ENCODE measurements at regions of chr15 and their contacts with region 1.

Region 1: GRCh38 chr15:22795206-22796063 is 9.0 kb downstream of the NIPA1 start:
- DNase-seq: no peak
- H3K4me3 Mint-ChIP-seq: no peak overlapping the region
- H3K27ac Mint-ChIP-seq: peak overlapping the region; percentile 52
- H3K4me1 Mint-ChIP-seq: peaks cover 34% of the 10 kb centered on the region
- H3K27me3 Mint-ChIP-seq: no peaks in the 10 kb centered on the region

Region 2: DNA sequence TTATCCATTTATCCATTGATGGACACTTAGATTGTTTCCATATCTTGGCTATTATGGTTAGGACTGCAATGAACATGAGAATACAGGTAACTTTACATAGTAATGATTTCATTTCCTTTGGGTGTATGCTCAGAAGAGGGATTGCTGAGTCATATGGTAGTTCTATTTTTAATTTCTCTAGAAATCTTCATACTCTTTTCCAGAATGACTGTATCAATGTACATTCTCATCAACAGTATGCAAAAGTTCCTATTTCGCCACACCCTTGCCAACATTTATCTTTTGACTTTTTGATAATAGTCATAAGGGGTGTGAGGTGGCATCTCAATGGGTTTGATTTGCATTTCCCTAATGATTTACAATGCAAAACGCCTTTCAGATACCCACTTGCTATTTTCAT is 15.2 kb before region 1 on chr15:
- intact Hi-C with region 1: loop called (anchors 1 kb)
- DNase-seq: no peak
- H3K4me3 Mint-ChIP-seq: peak overlapping the region; percentile 34
- H3K27ac Mint-ChIP-seq: peak overlapping the region; percentile 68
- H3K4me1 Mint-ChIP-seq: peaks cover 40% of the 10 kb centered on the region
- H3K27me3 Mint-ChIP-seq: peaks cover 7% of the 10 kb centered on the region